ENCODE measurements at regions of chr15 and their contacts with region 1.

Region 1: DNA sequence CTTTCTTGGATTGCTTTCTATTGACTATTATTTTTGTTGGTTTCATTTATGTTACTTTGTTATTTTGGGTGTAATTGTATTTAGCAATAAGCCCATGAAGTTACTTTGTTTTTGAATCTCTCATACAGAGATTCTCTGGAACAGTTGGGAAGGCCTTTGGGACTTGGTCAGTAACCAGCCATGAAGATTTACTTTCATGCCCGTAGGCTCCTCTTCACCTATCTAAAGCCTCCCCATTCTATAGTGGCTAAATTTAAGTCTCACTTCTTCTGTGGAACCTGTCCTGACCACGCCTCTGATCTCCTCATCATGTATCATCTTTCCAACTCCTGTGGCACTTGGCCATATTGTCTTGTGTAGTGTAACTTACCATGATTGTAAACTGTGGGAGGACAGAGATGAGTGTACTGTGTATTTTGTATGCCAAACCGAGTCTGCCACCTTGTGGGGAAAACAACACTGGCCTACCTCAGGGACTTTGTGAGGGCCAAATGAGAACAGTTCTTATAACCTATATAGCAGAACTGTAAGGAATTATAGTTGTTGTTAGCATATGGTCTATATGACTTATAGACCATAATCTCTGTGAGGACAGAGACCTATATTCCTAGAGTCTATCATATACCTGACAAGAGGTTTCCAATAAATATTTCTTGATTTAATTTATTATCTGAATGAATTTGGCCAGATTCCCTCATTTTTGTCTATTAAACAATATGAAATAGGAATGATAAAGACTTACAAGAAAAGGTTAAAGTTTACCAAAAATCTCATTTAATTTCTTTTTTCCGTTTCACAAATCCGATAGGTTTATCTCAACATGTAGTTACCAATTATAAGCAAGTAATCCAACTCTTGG is 75.0 kb downstream of the STARD9 start:
- DNase-seq: peak; percentile 77
- H3K4me3 ChIP-seq: no peak overlapping the region
- H3K27ac ChIP-seq: peak overlapping the region in 2 of 4 donors; percentile 6 to 41
- H3K4me1 ChIP-seq: peaks cover 0 to 8% (median 5%) of the 10 kb centered on the region in 4 donors
- H3K27me3 ChIP-seq: no peaks in the 10 kb centered on the region
- CTCF ChIP-seq: peak; percentile 70 to 83 (median 74)
- EP300 ChIP-seq: no peak
- POLR2A ChIP-seq: no peak

Region 2: GRCh38 chr15:42575188-42576039 is 75.0 kb before region 1 on chr15 and contains the start of gene STARD9:
- intact Hi-C with region 1: loop called (anchors 5 kb)
- DNase-seq: peak; percentile 100
- H3K4me3 ChIP-seq: peak within 1 kb of the TSS; percentile 73 to 97 (median 86)
- H3K27ac ChIP-seq: peak within 1 kb of the TSS; percentile 95 to 98 (median 97)
- H3K4me1 ChIP-seq: peaks cover 0 to 42% (median 38%) of the 10 kb centered on the region in 4 donors
- H3K27me3 ChIP-seq: no peaks in the 10 kb centered on the region
- CTCF ChIP-seq: no peak
- EP300 ChIP-seq: peak in 1 of 4 donors; percentile 11
- POLR2A ChIP-seq: peak; percentile 31 to 64
- total RNA-seq, gene STARD9: 36.4 to 125 (median 49.4) TPM

Region 3: GRCh38 chr15:42608110-42608531 is 42.3 kb before region 1 on chr15:
- intact Hi-C with region 1: loop called (anchors 5 kb)
- DNase-seq: no peak
- H3K4me3 ChIP-seq: no peak overlapping the region
- H3K27ac ChIP-seq: peak overlapping the region in 1 of 4 donors; percentile 4
- H3K4me1 ChIP-seq: peaks cover 0 to 49% (median 40%) of the 10 kb centered on the region in 4 donors
- H3K27me3 ChIP-seq: no peaks in the 10 kb centered on the region
- CTCF ChIP-seq: no peak
- EP300 ChIP-seq: no peak
- POLR2A ChIP-seq: no peak